ENCODE measurements at regions of chr15 and their contacts with region 1.

Region 1: DNA sequence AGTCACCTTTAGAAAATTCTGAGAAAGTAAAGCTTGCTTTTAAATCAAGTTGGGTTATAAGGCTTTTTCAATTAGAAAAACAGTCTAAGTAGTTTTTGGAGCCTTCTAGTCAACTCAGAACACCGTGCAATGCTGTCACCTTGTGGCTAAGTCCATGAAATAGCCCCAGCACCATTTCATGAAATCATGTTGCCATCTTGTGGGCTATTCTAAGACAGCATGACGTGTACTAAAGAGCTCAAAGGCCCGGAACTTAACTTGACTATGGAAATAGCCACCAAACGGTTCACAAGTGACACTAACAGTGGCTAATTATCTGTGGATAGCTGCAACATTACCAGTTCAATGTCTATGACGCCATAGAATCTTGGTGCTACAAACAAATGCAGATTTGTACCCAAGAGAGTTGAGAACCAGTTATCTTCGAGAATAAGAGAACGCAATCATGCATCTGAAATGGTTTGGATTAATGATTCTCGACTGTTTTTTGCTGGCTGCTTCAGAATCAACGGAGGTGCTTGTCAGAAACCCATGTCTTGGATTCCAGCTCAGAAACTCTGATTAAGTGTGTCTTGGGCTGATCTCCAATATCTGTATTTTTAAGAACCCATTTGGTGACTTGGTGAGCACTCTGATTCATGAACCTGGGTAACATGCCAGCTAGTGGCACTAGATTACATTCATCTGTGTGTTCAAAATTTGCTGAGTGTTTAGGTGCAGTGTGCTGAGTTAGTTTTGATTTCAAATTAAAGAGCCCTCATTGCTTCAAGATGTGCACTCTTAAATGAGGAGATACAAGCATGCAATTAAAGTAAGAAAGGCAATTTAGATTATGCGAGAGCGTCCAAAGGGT is 111.2 kb upstream of the MCTP2 start:
- DNase-seq: peak; percentile 49
- ATAC-seq: peak; percentile 100
- H3K4me3 ChIP-seq: no peak overlapping the region
- H3K27ac ChIP-seq: no peak overlapping the region
- H3K4me1 ChIP-seq: no peaks in the 10 kb centered on the region
- H3K27me3 ChIP-seq: no peaks in the 10 kb centered on the region
- CTCF ChIP-seq: peak; percentile 85 to 100 (median 94); a peak in 5 of 6 replicates
- EP300 ChIP-seq: no peak
- POLR2A ChIP-seq: no peak
- RAD21 ChIP-seq: peak; percentile 97

Region 2: DNA sequence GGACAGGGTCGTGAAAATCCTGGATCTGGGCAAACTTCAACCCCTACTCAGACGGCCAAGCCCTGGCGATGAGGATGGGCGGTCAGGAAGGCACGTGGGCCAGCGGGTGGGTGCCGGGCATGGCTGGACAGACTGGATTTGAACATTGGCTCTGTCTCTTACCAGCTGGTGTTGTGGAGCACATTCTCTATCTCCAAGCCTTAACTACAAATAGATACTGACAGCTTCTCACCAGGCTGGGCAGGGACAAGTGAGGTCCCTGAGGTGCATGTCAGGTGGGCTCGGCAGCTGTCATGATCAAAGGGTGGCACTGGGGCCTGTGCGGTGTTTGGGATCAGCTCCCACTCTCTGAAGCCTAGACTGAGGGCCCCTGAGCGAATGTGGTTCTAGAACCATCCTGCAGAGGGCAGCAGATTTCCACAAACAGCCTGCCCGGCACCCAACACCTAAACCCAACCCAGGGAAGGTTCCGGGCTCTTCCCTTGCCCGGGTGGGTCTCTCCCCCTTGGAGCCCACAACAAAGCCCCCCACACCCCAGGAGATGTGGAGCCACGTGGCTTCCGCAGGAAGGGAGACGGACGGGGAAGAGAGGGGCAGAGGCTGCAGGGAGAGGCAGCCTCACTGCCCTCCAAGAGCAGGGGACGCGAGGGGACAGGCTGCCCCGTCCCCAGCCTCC is 1089.6 kb before region 1 on chr15:
- CTCF ChIA-PET with region 1: interaction called, 54 read pairs
- POLR2A ChIA-PET with region 1: no interaction called
- RAD21 ChIA-PET with region 1: interaction called, 40 read pairs
- SMC1A ChIA-PET with region 1: interaction called, 5 read pairs
- in situ Hi-C with region 1: loop called (anchors 5 kb)
- intact Hi-C with region 1: loop called (anchors 2 kb)
- DNase-seq: peak; percentile 7
- ATAC-seq: peak; percentile 93
- H3K4me3 ChIP-seq: no peak overlapping the region
- H3K27ac ChIP-seq: no peak overlapping the region
- H3K4me1 ChIP-seq: no peaks in the 10 kb centered on the region
- H3K27me3 ChIP-seq: no peaks in the 10 kb centered on the region
- CTCF ChIP-seq: peak; percentile 80 to 88 (median 85); a peak in 5 of 6 replicates
- EP300 ChIP-seq: no peak
- POLR2A ChIP-seq: no peak
- RAD21 ChIP-seq: peak; percentile 78

Region 3: GRCh38 chr15:93035953-93036800 is 1084.0 kb before region 1 on chr15:
- CTCF ChIA-PET with region 1: interaction called, 54 read pairs
- POLR2A ChIA-PET with region 1: no interaction called
- RAD21 ChIA-PET with region 1: interaction called, 9 read pairs
- SMC1A ChIA-PET with region 1: interaction called, 5 read pairs
- in situ Hi-C with region 1: loop called (anchors 5 kb)
- intact Hi-C with region 1: loop called (anchors 2 kb)
- DNase-seq: no peak
- ATAC-seq: peak; percentile 91
- H3K4me3 ChIP-seq: no peak overlapping the region
- H3K27ac ChIP-seq: no peak overlapping the region
- H3K4me1 ChIP-seq: no peaks in the 10 kb centered on the region
- H3K27me3 ChIP-seq: no peaks in the 10 kb centered on the region
- CTCF ChIP-seq: peak; percentile 64 to 74 (median 66)
- EP300 ChIP-seq: no peak
- POLR2A ChIP-seq: no peak
- RAD21 ChIP-seq: peak; percentile 24; the same call in 1 of the 2 replicates

Region 4: GRCh38 chr15:93087825-93088199 is 1032.3 kb before region 1 on chr15:
- CTCF ChIA-PET with region 1: interaction called, 23 read pairs
- POLR2A ChIA-PET with region 1: no interaction called
- RAD21 ChIA-PET with region 1: interaction called, 14 read pairs
- SMC1A ChIA-PET with region 1: interaction called, 8 read pairs
- in situ Hi-C with region 1: no loop called
- intact Hi-C with region 1: no loop called
- DNase-seq: peak; percentile 15
- ATAC-seq: peak; percentile 87
- H3K4me3 ChIP-seq: no peak overlapping the region
- H3K27ac ChIP-seq: no peak overlapping the region
- H3K4me1 ChIP-seq: no peaks in the 10 kb centered on the region; the same call in 1 of the 2 replicates
- H3K27me3 ChIP-seq: peaks cover 8 to 11% of the 10 kb centered on the region in 2 experiments
- CTCF ChIP-seq: peak; percentile 74 to 83 (median 83)
- EP300 ChIP-seq: no peak
- POLR2A ChIP-seq: no peak
- RAD21 ChIP-seq: peak; percentile 68

Region 5: GRCh38 chr15:93997084-93997918 is 122.8 kb before region 1 on chr15:
- CTCF ChIA-PET with region 1: interaction called, 34 read pairs
- POLR2A ChIA-PET with region 1: no interaction called
- RAD21 ChIA-PET with region 1: interaction called, 8 read pairs
- SMC1A ChIA-PET with region 1: interaction called, 15 read pairs
- in situ Hi-C with region 1: no loop called
- intact Hi-C with region 1: loop called (anchors 1 kb)
- DNase-seq: no peak
- ATAC-seq: no peak
- H3K4me3 ChIP-seq: no peak overlapping the region
- H3K27ac ChIP-seq: no peak overlapping the region
- H3K4me1 ChIP-seq: no peaks in the 10 kb centered on the region
- H3K27me3 ChIP-seq: no peaks in the 10 kb centered on the region
- CTCF ChIP-seq: peak; percentile 56 to 65 (median 62)
- EP300 ChIP-seq: no peak
- POLR2A ChIP-seq: no peak
- RAD21 ChIP-seq: peak; percentile 40

Region 6: DNA sequence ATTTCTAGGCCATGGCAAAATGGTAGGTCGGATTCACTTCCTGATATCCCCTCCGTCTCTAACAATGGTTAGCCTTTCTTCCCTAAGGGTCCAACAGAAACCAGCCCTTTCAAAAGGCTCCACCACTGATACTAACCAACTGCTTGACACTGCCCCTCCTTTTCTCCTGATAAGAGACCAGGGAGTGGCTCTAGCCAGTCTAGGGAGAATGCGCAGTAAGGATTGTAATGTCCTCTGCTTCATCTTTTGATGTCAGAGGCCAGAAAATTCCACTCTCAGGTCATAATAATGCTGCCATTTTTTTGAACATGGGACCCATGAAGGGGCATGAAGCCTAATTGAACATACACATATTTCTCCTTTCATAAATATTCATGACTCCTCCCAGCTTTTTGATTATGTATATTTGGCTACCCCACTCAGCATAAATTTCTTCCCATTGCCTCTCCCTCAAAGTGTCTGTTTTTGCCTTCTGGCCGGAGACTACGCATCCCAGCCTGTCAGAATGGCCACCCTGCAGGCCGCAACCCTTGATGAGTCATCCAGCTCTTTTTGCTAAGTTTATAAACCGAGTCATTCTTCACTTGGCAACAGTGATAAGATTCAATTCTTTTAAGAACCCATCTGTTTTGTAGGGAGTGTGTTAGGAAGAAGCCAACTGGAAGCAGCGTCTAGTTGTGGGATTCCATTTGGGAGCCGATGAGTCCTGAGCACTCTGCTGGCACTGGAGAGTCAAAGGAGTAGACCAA is 77.8 kb before region 1 on chr15:
- CTCF ChIA-PET with region 1: no interaction called
- POLR2A ChIA-PET with region 1: no interaction called
- RAD21 ChIA-PET with region 1: no interaction called
- SMC1A ChIA-PET with region 1: no interaction called
- in situ Hi-C with region 1: no loop called
- intact Hi-C with region 1: no loop called
- DNase-seq: no peak
- ATAC-seq: no peak
- H3K4me3 ChIP-seq: no peak overlapping the region
- H3K27ac ChIP-seq: no peak overlapping the region
- H3K4me1 ChIP-seq: no peaks in the 10 kb centered on the region
- H3K27me3 ChIP-seq: no peaks in the 10 kb centered on the region
- CTCF ChIP-seq: no peak
- EP300 ChIP-seq: no peak
- POLR2A ChIP-seq: no peak
- RAD21 ChIP-seq: no peak

Region 7: GRCh38 chr15:94056314-94056713 is 63.8 kb before region 1 on chr15:
- CTCF ChIA-PET with region 1: no interaction called
- POLR2A ChIA-PET with region 1: no interaction called
- RAD21 ChIA-PET with region 1: no interaction called
- SMC1A ChIA-PET with region 1: no interaction called
- in situ Hi-C with region 1: no loop called
- intact Hi-C with region 1: no loop called
- DNase-seq: no peak
- ATAC-seq: no peak
- H3K4me3 ChIP-seq: no peak overlapping the region
- H3K27ac ChIP-seq: no peak overlapping the region
- H3K4me1 ChIP-seq: no peaks in the 10 kb centered on the region
- H3K27me3 ChIP-seq: no peaks in the 10 kb centered on the region
- CTCF ChIP-seq: no peak
- EP300 ChIP-seq: no peak
- POLR2A ChIP-seq: no peak
- RAD21 ChIP-seq: no peak

Region 8: DNA sequence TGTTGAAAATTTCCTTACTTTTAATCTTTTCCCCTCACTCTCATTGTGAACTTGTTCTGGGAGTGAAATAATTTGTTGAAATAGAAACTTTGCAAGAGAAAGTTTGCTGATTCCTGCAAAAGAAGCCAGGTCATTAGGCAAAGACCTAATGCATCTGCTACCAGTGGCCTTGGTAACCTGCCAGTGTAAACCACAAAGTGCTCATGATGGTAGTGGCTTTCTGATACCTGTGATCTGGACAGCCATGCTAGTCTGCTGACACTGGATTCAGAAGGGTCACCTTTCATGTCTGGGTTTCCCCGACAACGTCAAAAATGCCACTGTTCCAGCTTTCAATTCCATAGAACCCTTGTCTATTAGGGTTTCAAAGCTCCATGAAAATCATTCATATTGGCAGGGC is 12.5 kb before region 1 on chr15:
- CTCF ChIA-PET with region 1: interaction called, 15 read pairs
- POLR2A ChIA-PET with region 1: no interaction called
- RAD21 ChIA-PET with region 1: interaction called, 4 read pairs
- SMC1A ChIA-PET with region 1: interaction called, 9 read pairs
- in situ Hi-C with region 1: no loop called
- intact Hi-C with region 1: no loop called
- DNase-seq: no peak
- ATAC-seq: no peak
- H3K4me3 ChIP-seq: no peak overlapping the region
- H3K27ac ChIP-seq: no peak overlapping the region
- H3K4me1 ChIP-seq: no peaks in the 10 kb centered on the region
- H3K27me3 ChIP-seq: no peaks in the 10 kb centered on the region
- CTCF ChIP-seq: no peak
- EP300 ChIP-seq: no peak
- POLR2A ChIP-seq: no peak
- RAD21 ChIP-seq: no peak